ENCODE measurements at regions of chr6 and their contacts with region 1.

Region 1: GRCh38 chr6:90328004-90328403 is 31.4 kb upstream of the BACH2 start:
- DNase-seq: peak; percentile 13
- ATAC-seq: no peak
- H3K4me3 ChIP-seq: no peak overlapping the region
- H3K27ac ChIP-seq: no peak overlapping the region
- H3K4me1 ChIP-seq: no peaks in the 10 kb centered on the region
- H3K27me3 ChIP-seq: no peaks in the 10 kb centered on the region
- CTCF ChIP-seq: no peak

Region 2: GRCh38 chr6:90190752-90191395 is 137.1 kb before region 1 on chr6:
- CTCF ChIA-PET with region 1: interaction called, 12 read pairs
- POLR2A ChIA-PET with region 1: no interaction called
- in situ Hi-C with region 1: no loop called
- intact Hi-C with region 1: no loop called
- DNase-seq: no peak
- ATAC-seq: no peak
- H3K4me3 ChIP-seq: no peak overlapping the region
- H3K27ac ChIP-seq: no peak overlapping the region
- H3K4me1 ChIP-seq: no peaks in the 10 kb centered on the region; the same call in 1 of the 2 replicates
- H3K27me3 ChIP-seq: no peaks in the 10 kb centered on the region
- CTCF ChIP-seq: no peak

Region 3: DNA sequence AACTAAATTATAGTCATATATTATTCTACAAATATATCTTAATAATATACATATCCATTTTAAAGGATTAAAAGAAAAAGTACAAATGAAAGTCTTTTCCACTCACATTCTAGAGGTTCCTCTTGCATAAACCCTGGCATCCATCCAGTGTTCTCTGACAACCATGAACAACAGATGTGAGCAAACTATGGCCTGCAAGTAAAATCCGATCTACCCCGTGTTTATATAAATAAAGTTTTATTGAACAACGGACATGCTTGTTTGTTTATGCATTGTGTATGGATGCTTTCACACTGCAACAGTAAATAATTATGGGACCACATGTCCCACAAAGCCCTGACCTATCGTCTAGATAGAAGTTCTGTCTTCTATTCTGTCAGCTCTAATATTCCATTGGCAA is 1969.1 kb after region 1 on chr6:
- CTCF ChIA-PET with region 1: no interaction called
- POLR2A ChIA-PET with region 1: no interaction called
- in situ Hi-C with region 1: no loop called
- intact Hi-C with region 1: no loop called
- DNase-seq: no peak
- ATAC-seq: no peak
- H3K4me3 ChIP-seq: no peak overlapping the region
- H3K27ac ChIP-seq: no peak overlapping the region
- H3K4me1 ChIP-seq: no peaks in the 10 kb centered on the region
- H3K27me3 ChIP-seq: no peaks in the 10 kb centered on the region
- CTCF ChIP-seq: no peak

Measured in Panc1 (cell line).